ENCODE measurements at regions of chr3 and their contacts with region 1.

Region 1: DNA sequence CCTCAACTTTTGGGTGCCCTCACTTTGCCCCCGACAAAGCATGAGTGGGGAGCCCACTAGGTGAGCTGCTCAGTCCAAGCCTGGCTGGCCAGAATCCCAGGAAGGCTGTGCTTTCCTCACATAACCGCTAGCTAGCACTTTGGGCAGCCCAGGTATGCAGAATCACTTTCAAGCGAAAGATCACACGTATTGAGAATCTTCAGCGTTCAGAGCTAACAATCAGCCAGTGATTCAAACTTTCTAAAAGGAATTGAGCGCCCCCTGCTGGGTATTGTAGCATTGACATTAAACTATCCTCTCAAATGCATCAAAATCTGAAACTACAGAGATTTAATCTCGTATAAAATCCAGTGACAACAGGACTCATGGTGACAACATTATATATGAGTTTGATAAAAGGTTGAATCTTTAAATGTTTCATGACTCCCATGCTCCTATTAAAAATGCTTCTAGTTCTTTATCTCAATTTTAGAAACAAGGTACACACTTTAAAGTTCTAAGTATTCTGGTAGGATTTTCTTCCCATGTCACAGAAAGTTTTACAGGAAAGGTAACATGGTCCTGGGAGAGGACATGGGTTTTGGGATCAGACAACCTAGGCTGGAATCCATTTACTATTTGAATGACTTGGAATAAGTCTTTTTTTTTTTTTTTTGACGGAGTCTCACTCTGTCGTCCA is 11.8 kb downstream of the ANAPC13 start:
- DNase-seq: peak; percentile 80
- H3K4me3 ChIP-seq: no peak overlapping the region
- H3K27ac ChIP-seq: no peak overlapping the region
- H3K4me1 ChIP-seq: no peaks in the 10 kb centered on the region
- CTCF ChIP-seq: peak; percentile 94

Region 2: DNA sequence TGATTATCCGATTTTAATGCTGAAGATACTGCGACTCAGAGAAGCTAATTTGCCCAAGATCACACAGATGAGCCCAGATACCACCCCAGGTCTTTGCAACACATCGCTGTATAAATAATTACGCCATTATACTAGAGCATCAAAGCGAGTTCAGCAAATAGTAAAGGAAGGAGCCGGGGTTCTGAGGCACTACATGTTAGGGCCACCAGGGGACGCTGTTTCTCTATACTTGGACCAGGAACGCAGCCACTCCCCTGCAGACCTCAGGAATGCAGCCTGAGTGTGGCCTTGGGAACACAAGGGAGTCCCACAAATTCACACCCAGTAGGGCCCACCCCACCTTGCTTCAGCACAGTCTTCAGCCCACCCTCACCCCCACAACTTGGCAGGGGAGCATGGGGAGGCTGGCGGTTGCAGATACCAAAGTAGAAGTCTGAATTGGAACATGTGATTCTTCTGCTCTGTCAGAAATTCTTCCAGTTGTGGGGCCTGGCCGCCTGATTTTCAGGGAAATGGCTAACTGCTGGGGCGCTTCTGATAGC is 165.6 kb before region 1 on chr3:
- CTCF ChIA-PET with region 1: no interaction called
- POLR2A ChIA-PET with region 1: no interaction called
- intact Hi-C with region 1: loop called (anchors 1 kb)
- DNase-seq: peak; percentile 72
- H3K4me3 ChIP-seq: no peak overlapping the region
- H3K27ac ChIP-seq: no peak overlapping the region
- H3K4me1 ChIP-seq: no peaks in the 10 kb centered on the region
- CTCF ChIP-seq: peak; percentile 99

Region 3: DNA sequence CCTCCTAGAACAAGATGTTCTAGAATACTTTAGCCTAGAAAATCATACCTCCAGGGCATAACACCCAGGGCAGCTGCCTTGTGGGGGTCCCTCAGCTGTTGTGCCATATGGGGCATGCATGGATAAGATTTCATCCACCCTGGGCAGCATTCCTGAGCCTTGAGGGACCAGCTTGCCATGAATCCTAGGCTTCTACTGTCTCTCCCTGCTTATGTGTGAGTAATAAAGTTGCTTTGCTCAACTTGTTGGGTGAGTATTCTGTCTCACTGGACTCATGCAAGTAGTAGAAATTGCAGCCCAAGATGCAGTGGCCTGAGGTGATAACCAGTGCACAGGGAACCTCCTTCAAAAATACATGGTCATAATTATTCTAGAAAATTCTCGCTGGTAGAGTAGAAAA is 269.0 kb after region 1 on chr3:
- CTCF ChIA-PET with region 1: no interaction called
- POLR2A ChIA-PET with region 1: no interaction called
- intact Hi-C with region 1: no loop called
- DNase-seq: no peak
- H3K4me3 ChIP-seq: no peak overlapping the region
- H3K27ac ChIP-seq: no peak overlapping the region
- H3K4me1 ChIP-seq: no peaks in the 10 kb centered on the region
- CTCF ChIP-seq: no peak

Region 4: DNA sequence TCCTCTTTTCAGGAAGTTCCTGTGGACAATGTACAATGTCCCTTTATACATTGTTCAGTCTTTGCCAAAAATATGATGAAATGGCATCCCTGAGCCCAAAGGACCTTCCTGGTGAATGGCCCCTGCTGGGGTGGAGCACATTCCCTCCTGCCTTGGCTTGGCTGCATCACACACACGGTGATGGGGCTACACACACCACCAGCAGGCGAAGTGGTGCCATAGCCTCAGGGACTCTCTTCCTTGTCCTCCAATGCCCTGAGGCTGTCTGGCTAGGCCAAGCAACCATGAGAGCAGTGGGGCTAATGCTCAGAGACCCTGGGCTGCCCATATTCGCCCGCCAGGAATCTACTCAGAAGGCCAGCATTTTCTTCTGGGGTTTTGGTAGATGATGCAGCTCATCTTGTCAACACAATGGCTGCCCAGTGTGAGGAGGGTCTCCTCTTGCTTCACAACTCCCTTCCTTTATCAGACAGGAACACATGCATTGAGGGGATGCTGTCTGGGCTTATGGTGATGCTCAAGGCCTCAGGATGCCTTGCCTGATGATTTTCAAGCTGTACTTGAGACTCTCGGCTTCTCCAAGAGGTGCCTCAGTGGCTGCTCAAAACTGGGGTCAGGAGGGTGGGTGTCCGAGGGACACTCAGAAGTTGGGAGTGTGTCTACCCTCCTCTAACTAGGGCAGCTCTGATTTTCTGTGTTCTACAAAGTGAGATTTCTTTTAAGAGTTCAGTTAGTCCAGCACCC is 280.2 kb after region 1 on chr3:
- CTCF ChIA-PET with region 1: no interaction called
- POLR2A ChIA-PET with region 1: no interaction called
- intact Hi-C with region 1: no loop called
- DNase-seq: no peak
- H3K4me3 ChIP-seq: no peak overlapping the region
- H3K27ac ChIP-seq: no peak overlapping the region
- H3K4me1 ChIP-seq: no peaks in the 10 kb centered on the region
- CTCF ChIP-seq: no peak

Measured in OCI-LY7 (cell line).